ENCODE measurements at regions of chr1 and their contacts with region 1.

Region 1: GRCh38 chr1:244835276-244836134 is at the start of gene COX20:
- DNase-seq: peak; percentile 89 to 92
- ATAC-seq: peak; percentile 83 to 95 (median 91)
- H3K4me3 ChIP-seq: peak within 1 kb of the TSS; percentile 49 to 90 (median 76)
- H3K27ac ChIP-seq: peak within 1 kb of the TSS; percentile 96 to 100 (median 99)
- H3K4me1 ChIP-seq: peaks cover 0 to 51% (median 45%) of the 10 kb centered on the region in 9 donors
- H3K27me3 ChIP-seq: no peaks in the 10 kb centered on the region
- CTCF ChIP-seq: peak in 3 of 9 donors; percentile 6 to 21 (median 8)
- total RNA-seq, gene COX20: 56.6 to 94.1 (median 64.4) TPM

Region 2: GRCh38 chr1:244854865-244855578 is 19.5 kb after region 1 on chr1:
- intact Hi-C with region 1: loop called in 3 of 10 experiments (anchors 2 kb)
- DNase-seq: no peak
- ATAC-seq: no peak
- H3K4me3 ChIP-seq: no peak overlapping the region
- H3K27ac ChIP-seq: peak overlapping the region in 1 of 10 donors; percentile 24
- H3K4me1 ChIP-seq: peaks cover 8 to 87% (median 54%) of the 10 kb centered on the region in 9 donors
- H3K27me3 ChIP-seq: no peaks in the 10 kb centered on the region
- CTCF ChIP-seq: no peak

Region 3: GRCh38 chr1:244896550-244896949 is 61.0 kb after region 1 on chr1:
- intact Hi-C with region 1: no loop called
- DNase-seq: no peak
- ATAC-seq: no peak
- H3K4me3 ChIP-seq: no peak overlapping the region
- H3K27ac ChIP-seq: no peak overlapping the region
- H3K4me1 ChIP-seq: no peaks in the 10 kb centered on the region
- H3K27me3 ChIP-seq: no peaks in the 10 kb centered on the region
- CTCF ChIP-seq: no peak

Region 4: GRCh38 chr1:245008761-245009160 is 173.3 kb after region 1 on chr1:
- intact Hi-C with region 1: no loop called
- DNase-seq: no peak
- ATAC-seq: no peak
- H3K4me3 ChIP-seq: no peak overlapping the region
- H3K27ac ChIP-seq: no peak overlapping the region
- H3K4me1 ChIP-seq: peaks cover 0 to 7% (median 0%) of the 10 kb centered on the region in 9 donors
- H3K27me3 ChIP-seq: no peaks in the 10 kb centered on the region
- CTCF ChIP-seq: no peak

Region 5: DNA sequence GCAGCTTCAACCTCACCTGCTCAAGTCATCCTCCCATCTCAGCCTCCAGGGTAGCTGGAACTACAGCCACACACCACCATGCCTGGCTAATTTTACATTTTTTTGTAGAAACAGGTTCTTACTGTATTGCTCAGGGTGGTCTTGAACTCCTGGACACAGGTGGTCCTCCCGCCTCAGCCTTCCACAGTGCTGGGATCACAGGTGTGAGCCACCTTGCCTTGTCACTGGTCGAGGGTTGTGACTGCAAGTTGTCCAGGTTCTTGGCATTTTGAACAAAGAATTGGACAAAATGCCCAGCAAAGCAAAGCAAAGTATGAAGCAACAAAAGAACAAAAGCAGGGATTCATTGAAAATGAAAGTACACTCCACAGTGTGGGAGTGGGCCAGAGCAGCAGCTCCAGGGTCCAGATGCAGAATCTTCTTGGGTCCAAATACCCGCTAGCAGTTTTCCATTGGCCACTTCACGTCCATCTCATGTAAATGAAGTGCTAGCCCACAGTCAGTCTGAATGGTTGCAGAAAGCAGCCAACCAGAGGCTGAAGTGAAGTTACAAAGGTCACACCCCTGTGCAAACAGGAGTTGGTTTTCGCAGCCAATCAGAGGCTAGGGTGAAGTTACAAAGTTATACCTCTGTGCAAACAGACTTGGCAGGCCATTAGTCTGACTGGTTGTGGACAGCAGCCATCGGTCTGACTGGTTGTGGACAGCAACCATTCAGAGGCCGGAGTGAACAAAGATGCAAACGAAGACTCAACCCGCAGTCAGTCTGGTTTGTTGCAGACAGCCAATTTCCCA is 209.8 kb after region 1 on chr1:
- intact Hi-C with region 1: loop called in 4 of 10 experiments (anchors 10 kb)
- DNase-seq: peak in 1 of 2 donors; percentile 74
- ATAC-seq: peak; percentile 34 to 84 (median 62)
- H3K4me3 ChIP-seq: peak overlapping the region in 2 of 10 donors; percentile 1 to 8
- H3K27ac ChIP-seq: peak overlapping the region in 6 of 10 donors; percentile 2 to 56 (median 34)
- H3K4me1 ChIP-seq: peaks cover 0 to 43% (median 13%) of the 10 kb centered on the region in 9 donors
- H3K27me3 ChIP-seq: no peaks in the 10 kb centered on the region
- CTCF ChIP-seq: no peak

Measured in heart right ventricle (tissue), 16 donors.